MCF 10A (cell line): ENCODE measurements at regions of chr4 and their contacts with region 1.

Region 1: GRCh38 chr4:19309378-19309777 is 942.3 kb upstream of the SLIT2 start:
- DNase-seq: peak; percentile 44
- H3K4me3 Mint-ChIP-seq: no peak overlapping the region
- H3K27ac Mint-ChIP-seq: no peak overlapping the region
- H3K4me1 Mint-ChIP-seq: peaks cover 8% of the 10 kb centered on the region
- H3K27me3 Mint-ChIP-seq: no peaks in the 10 kb centered on the region
- CTCF ChIP-seq: peak; percentile 58

Region 2: DNA sequence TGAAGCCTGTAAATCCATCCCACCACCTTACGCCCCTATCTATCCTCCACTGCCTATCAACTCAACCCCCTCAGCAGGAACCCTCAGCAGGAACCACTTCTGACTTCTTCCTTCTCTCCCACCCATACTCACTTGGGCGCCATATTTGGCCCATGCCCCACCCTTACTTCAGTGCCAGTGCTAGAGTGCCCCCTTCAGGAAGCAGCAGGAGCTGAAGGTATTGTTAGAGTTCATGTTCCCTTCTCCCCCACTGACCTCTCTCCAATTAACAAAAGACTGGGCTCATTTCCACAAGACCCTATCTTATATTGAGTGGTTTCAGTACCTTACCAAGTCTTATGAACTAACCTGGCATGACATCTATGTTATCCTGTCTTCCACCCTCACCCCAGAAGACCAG is 579.2 kb after region 1 on chr4:
- CTCF ChIA-PET with region 1: no interaction called
- POLR2A ChIA-PET with region 1: no interaction called
- intact Hi-C with region 1: no loop called
- DNase-seq: no peak
- H3K4me3 Mint-ChIP-seq: no peak overlapping the region
- H3K27ac Mint-ChIP-seq: no peak overlapping the region
- H3K4me1 Mint-ChIP-seq: no peaks in the 10 kb centered on the region
- H3K27me3 Mint-ChIP-seq: no peaks in the 10 kb centered on the region
- CTCF ChIP-seq: no peak

Region 3: GRCh38 chr4:20075248-20075871 is 766.0 kb after region 1 on chr4:
- CTCF ChIA-PET with region 1: no interaction called
- POLR2A ChIA-PET with region 1: no interaction called
- intact Hi-C with region 1: loop called (anchors 10 kb)
- DNase-seq: no peak
- H3K4me3 Mint-ChIP-seq: no peak overlapping the region
- H3K27ac Mint-ChIP-seq: no peak overlapping the region
- H3K4me1 Mint-ChIP-seq: no peaks in the 10 kb centered on the region
- H3K27me3 Mint-ChIP-seq: no peaks in the 10 kb centered on the region
- CTCF ChIP-seq: no peak